Heart right ventricle (tissue), 16 donors: ENCODE measurements at regions of chr3 and their contacts with region 1.

Region 1: DNA sequence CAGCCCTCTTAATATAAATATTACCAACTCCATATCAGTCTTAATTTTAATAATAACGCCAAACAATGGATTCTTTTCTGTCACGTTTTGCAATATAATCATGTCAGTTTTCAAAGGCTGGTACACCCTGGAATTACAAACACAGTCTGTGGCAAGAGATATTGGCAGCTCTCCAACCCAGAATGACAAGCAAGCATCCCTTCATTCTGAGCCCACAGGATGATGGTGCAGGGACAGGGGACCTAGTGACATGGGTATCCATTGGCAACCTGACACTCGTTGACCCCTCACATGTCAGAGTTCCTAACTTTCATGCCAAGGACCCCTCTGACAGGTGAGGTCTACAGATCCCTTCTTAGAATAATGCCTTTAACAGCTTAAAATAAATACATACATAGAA is 154.5 kb upstream of the TSC22D2 start:
- DNase-seq: peak in 1 of 2 donors; percentile 19
- ATAC-seq: peak in 3 of 8 donors; percentile 29 to 57 (median 54)
- H3K4me3 ChIP-seq: no peak overlapping the region
- H3K27ac ChIP-seq: peak overlapping the region in 5 of 10 donors; percentile 80 to 90 (median 87)
- H3K4me1 ChIP-seq: peaks cover 0 to 47% (median 11%) of the 10 kb centered on the region in 9 donors
- H3K27me3 ChIP-seq: no peaks in the 10 kb centered on the region
- CTCF ChIP-seq: no peak

Region 2: GRCh38 chr3:149575961-149576564 is 677.6 kb before region 1 on chr3:
- intact Hi-C with region 1: no loop called
- DNase-seq: peak in 1 of 2 donors; percentile 68
- ATAC-seq: peak; percentile 71 to 89 (median 80)
- H3K4me3 ChIP-seq: peak overlapping the region in 6 of 10 donors; percentile 2 to 22 (median 8)
- H3K27ac ChIP-seq: peak overlapping the region; percentile 68 to 93 (median 82)
- H3K4me1 ChIP-seq: peaks cover 6 to 100% (median 92%) of the 10 kb centered on the region in 9 donors
- H3K27me3 ChIP-seq: peaks cover 0 to 3% (median 0%) of the 10 kb centered on the region in 7 donors
- CTCF ChIP-seq: peak in 1 of 9 donors; percentile 11

Region 3: DNA sequence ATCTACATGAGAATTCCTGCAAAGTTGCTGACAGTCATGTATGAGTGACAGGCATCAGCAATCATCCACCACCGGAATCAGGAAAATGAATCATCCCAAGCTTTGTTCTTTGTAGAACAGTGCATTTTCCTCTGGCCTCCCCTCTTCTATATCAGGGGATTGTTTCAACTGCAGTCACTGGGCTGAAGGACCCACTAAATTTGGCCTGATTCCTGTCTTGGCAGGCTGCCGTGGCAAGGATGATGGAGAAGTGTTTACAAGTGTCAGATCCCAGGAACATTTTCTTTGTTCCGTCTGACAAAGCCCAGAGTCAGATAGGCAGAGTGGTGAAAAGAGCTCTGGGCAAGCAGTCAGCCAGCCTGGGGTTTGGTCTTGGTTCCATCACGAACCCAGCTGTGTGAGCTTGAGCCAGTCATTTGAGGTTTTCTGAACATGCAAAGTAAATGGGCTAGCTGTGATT is 20.6 kb before region 1 on chr3:
- intact Hi-C with region 1: loop called in 1 of 10 experiments (anchors 2 kb)
- DNase-seq: peak; percentile 77 to 82
- ATAC-seq: peak; percentile 78 to 98 (median 94)
- H3K4me3 ChIP-seq: no peak overlapping the region
- H3K27ac ChIP-seq: peak overlapping the region in 8 of 10 donors; percentile 7 to 56 (median 40)
- H3K4me1 ChIP-seq: peaks cover 0 to 48% (median 22%) of the 10 kb centered on the region in 9 donors
- H3K27me3 ChIP-seq: no peaks in the 10 kb centered on the region
- CTCF ChIP-seq: no peak